ENCODE measurements at regions of chr3 and their contacts with region 1.

Region 1: GRCh38 chr3:121545574-121546455 is at the start of gene POLQ:
- DNase-seq: peak; percentile 84 to 92 (median 88)
- H3K4me3 ChIP-seq: peak within 1 kb of the TSS; percentile 90 to 99
- H3K4me3 Mint-ChIP-seq: peak within 1 kb of the TSS; percentile 89 to 95 (median 92)
- H3K27ac ChIP-seq: peak within 1 kb of the TSS; percentile 64
- H3K27ac Mint-ChIP-seq: peak within 1 kb of the TSS; percentile 89 to 96 (median 92)
- H3K4me1 ChIP-seq: peaks cover 10% of the 10 kb centered on the region
- H3K4me1 Mint-ChIP-seq: peaks cover 6 to 11% (median 10%) of the 10 kb centered on the region in 4 donors
- H3K27me3 ChIP-seq: no peaks in the 10 kb centered on the region
- H3K27me3 Mint-ChIP-seq: no peaks in the 10 kb centered on the region
- total RNA-seq, gene POLQ: 0.28 to 0.35 TPM

Region 2: DNA sequence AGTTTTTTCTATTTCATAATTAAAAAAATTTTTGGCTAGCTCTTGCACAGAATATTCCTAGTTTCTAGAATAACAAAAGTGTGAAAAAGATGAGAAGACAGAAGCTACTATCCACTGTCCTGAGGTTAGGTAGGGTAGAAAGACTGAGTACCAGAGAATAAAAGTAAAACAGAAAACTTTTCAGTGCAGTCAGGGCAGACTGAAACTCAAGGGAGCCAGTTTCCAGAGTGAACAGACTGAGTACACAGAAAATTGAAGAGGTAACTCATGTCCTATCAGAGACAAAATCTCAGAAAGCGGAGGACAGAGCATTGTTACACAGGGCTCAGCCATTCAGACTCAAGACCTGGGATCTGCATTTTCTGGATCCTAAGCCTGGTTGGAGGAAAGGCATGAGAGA is 38.6 kb after region 1 on chr3:
- CTCF ChIA-PET with region 1: no interaction called
- POLR2A ChIA-PET with region 1: no interaction called
- intact Hi-C with region 1: no loop called
- DNase-seq: no peak
- H3K4me3 ChIP-seq: no peak overlapping the region
- H3K4me3 Mint-ChIP-seq: no peak overlapping the region
- H3K27ac ChIP-seq: no peak overlapping the region
- H3K27ac Mint-ChIP-seq: no peak overlapping the region
- H3K4me1 ChIP-seq: no peaks in the 10 kb centered on the region
- H3K4me1 Mint-ChIP-seq: no peaks in the 10 kb centered on the region
- H3K27me3 ChIP-seq: no peaks in the 10 kb centered on the region
- H3K27me3 Mint-ChIP-seq: peaks cover 14 to 15% of the 10 kb centered on the region in 2 donors

Region 3: DNA sequence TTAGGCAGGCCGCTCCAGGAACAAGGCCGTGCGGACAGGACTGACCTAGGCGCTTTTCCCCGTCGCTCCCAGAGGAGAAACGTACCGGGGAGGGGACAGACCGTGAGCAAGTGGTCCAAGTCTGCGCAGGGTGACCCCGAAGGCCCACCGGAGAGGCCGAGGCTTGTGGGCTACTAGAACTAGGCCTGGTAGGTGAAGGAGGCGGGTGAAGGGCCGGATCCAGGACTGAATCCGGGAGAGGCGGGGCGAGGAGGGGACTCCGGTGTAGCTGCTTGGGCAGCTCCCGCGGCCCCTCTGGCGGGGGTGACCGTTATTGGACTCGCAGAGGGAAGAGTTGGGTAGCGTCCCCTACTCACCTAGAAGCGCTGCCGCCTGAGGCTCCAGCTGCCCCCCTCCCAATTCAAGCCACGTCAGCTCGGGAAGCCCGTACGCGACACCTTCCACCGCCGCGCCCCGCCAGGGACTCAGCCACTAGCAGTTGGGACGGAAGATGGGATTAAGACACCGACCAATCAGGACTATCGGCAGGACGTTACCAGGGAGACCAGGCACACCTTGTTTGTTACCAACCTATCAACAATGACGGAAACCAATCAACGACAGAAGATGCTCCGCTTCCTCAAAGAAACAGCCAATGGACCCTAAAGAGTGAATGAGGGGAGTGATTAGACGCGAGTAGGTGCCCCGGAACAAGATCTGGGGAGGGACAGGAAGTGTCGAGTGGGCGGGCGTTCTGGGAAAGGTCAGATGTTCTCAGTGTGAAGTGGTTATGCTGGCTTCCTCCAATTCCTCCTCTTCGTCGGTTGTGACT is 203.7 kb after region 1 on chr3 and contains the start of gene GOLGB1:
- CTCF ChIA-PET with region 1: no interaction called
- POLR2A ChIA-PET with region 1: interaction called, 4 read pairs
- intact Hi-C with region 1: loop called (anchors 1 kb)
- DNase-seq: peak; percentile 93 to 98 (median 97)
- H3K4me3 ChIP-seq: peak within 1 kb of the TSS; percentile 75 to 86
- H3K4me3 Mint-ChIP-seq: peak within 1 kb of the TSS in 2 of 8 donors; percentile 17 to 44
- H3K27ac ChIP-seq: peak within 1 kb of the TSS; percentile 99
- H3K27ac Mint-ChIP-seq: no peak within 1 kb of the TSS
- H3K4me1 ChIP-seq: peaks cover 34% of the 10 kb centered on the region
- H3K4me1 Mint-ChIP-seq: peaks cover 8 to 10% (median 9%) of the 10 kb centered on the region in 4 donors
- H3K27me3 ChIP-seq: no peaks in the 10 kb centered on the region
- H3K27me3 Mint-ChIP-seq: peaks cover 6 to 7% of the 10 kb centered on the region in 2 donors
- total RNA-seq, gene GOLGB1: 45.7 to 49.3 TPM

Region 4: GRCh38 chr3:122092460-122093165 is 546.8 kb after region 1 on chr3:
- CTCF ChIA-PET with region 1: interaction called, 4 read pairs
- POLR2A ChIA-PET with region 1: no interaction called
- intact Hi-C with region 1: loop called (anchors 1 kb)
- DNase-seq: peak in 4 of 5 donors; percentile 6 to 47 (median 12)
- H3K4me3 ChIP-seq: no peak overlapping the region
- H3K4me3 Mint-ChIP-seq: peak overlapping the region in 3 of 8 donors; percentile 11 to 66 (median 34)
- H3K27ac ChIP-seq: no peak overlapping the region
- H3K27ac Mint-ChIP-seq: peak overlapping the region in 3 of 7 donors; percentile 30 to 77 (median 36)
- H3K4me1 ChIP-seq: no peaks in the 10 kb centered on the region
- H3K4me1 Mint-ChIP-seq: peaks cover 4 to 6% (median 5%) of the 10 kb centered on the region in 4 donors
- H3K27me3 ChIP-seq: peaks cover 8% of the 10 kb centered on the region
- H3K27me3 Mint-ChIP-seq: no peaks in the 10 kb centered on the region

Region 5: DNA sequence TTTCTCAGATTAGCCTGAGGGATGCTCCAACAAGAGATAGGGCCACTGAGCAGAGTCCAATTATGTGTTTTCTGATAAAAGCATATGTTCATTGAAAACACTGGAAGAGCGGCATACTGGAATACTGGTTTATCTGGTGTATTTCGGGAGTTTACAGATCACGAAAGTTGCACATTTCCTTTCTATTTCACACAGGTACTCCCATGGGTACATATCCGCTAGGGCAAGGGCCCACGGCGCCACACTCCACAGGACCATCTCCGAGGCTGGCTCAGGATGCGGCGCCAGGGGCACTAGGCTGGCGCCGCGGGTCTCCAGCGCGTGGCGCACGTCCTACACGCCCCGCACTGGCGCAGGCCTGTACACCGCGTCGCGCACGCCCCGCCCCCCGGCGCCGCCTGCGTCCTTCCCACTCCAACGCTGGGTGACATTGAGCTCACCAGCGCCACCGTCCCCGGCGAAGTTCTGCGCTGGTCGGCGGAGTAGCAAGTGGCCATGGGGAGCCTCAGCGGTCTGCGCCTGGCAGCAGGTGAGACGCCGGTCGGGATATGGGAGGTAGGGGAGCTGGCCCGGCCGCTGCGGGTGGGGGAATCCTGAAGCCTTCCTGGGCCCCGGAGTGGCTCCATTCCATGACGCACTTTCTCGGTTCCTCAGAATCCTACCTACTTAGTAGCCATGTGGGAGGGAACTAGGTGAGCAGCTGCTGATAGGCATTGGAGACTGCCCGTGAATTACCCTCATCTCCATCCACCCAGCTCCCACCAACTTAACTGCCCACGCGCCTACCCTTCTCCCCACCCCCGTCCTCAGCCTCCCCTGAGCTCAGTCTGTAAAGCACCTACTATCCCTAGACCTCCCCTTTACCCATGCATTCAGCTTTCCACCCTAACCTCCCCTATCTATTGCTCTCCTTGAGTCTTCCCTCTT is 838.2 kb after region 1 on chr3 and contains the start of gene FAM162A:
- CTCF ChIA-PET with region 1: interaction called, 5 read pairs
- POLR2A ChIA-PET with region 1: interaction called, 10 read pairs
- intact Hi-C with region 1: loop called (anchors 1 kb)
- DNase-seq: peak; percentile 92 to 93 (median 93)
- H3K4me3 ChIP-seq: peak within 1 kb of the TSS; percentile 72 to 84
- H3K4me3 Mint-ChIP-seq: peak within 1 kb of the TSS; percentile 89 to 96 (median 94)
- H3K27ac ChIP-seq: peak within 1 kb of the TSS; percentile 76
- H3K27ac Mint-ChIP-seq: peak within 1 kb of the TSS; percentile 93 to 98 (median 95)
- H3K4me1 ChIP-seq: peaks cover 31% of the 10 kb centered on the region
- H3K4me1 Mint-ChIP-seq: peaks cover 21 to 51% (median 36%) of the 10 kb centered on the region in 4 donors
- H3K27me3 ChIP-seq: no peaks in the 10 kb centered on the region
- H3K27me3 Mint-ChIP-seq: no peaks in the 10 kb centered on the region
- total RNA-seq, gene FAM162A: 31.1 to 32.8 TPM

Region 6: DNA sequence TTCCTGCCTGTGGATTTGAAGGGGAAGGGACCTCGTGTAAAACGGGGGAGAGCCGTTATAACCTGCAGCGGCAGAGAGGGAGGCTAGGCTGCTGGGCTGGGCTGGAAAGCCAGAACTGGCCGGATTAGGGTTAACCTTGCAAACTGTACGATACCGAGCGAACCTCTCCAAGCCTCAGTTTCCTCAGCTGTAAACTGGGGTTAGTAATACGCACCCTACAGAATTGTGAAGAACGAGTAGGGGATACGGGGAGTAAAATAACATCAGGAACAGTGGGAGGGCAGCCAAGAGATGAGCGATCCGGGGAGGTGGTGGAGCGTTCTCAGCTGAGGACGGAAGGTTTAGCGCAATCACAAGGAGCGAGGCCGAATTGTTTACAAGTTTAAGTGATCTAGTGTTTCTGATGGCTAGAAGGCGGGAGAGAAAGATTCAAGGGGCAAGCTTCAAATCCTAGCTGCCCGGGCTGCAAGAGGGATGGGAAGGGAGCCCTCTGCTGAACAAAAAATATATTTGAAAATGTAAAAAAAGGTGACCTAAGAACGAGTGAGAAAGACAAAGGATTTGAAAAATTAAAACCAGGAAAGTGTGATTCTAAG is 1482.5 kb after region 1 on chr3:
- CTCF ChIA-PET with region 1: interaction called, 26 read pairs
- POLR2A ChIA-PET with region 1: no interaction called
- intact Hi-C with region 1: no loop called
- DNase-seq: peak in 4 of 5 donors; percentile 13 to 39 (median 34)
- H3K4me3 ChIP-seq: peak overlapping the region; percentile 61 to 81
- H3K4me3 Mint-ChIP-seq: peak overlapping the region; percentile 76 to 92 (median 84)
- H3K27ac ChIP-seq: no peak overlapping the region
- H3K27ac Mint-ChIP-seq: peak overlapping the region in 2 of 7 donors; percentile 3 to 49
- H3K4me1 ChIP-seq: peaks cover 19% of the 10 kb centered on the region
- H3K4me1 Mint-ChIP-seq: peaks cover 9 to 22% (median 16%) of the 10 kb centered on the region in 4 donors
- H3K27me3 ChIP-seq: peaks cover 53% of the 10 kb centered on the region
- H3K27me3 Mint-ChIP-seq: peaks cover 43 to 54% of the 10 kb centered on the region in 2 donors

Measured in CD4-positive, alpha-beta memory T cell (primary cell).